ENCODE measurements at regions of chr3 and their contacts with region 1.

Region 1: GRCh38 chr3:107740992-107741896 is 218.5 kb downstream of the BBX start:
- DNase-seq: no peak
- H3K4me3 ChIP-seq: no peak overlapping the region
- CTCF ChIP-seq: peak; percentile 13

Region 2: DNA sequence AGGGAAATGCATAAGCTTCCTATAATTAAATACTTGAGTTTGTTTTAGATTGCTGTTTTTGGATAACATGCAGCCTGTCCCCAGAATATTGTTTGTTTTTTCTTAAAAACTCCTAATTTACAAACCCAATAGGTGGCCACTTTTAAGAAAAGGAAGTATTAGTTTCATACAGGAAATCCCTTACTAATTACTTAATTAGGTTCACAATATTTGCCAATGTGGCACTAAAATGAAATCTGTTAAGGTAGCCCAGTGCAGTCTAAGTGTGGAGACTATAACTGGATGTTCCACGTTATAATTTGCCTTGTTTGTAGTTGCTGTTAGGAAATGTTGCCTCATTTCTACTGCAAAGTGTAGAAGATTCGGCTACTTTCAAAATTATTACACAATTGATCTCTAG is 22.7 kb before region 1 on chr3:
- CTCF ChIA-PET with region 1: interaction called, 14 read pairs
- POLR2A ChIA-PET with region 1: no interaction called
- DNase-seq: no peak
- H3K4me3 ChIP-seq: no peak overlapping the region
- CTCF ChIP-seq: no peak

Region 3: GRCh38 chr3:107727102-107727501 is 14.1 kb before region 1 on chr3:
- CTCF ChIA-PET with region 1: interaction called, 17 read pairs
- POLR2A ChIA-PET with region 1: no interaction called
- DNase-seq: no peak
- H3K4me3 ChIP-seq: no peak overlapping the region
- CTCF ChIP-seq: no peak

Region 4: GRCh38 chr3:107753480-107753879 is 12.2 kb after region 1 on chr3:
- CTCF ChIA-PET with region 1: interaction called, 48 read pairs
- POLR2A ChIA-PET with region 1: no interaction called
- DNase-seq: no peak
- H3K4me3 ChIP-seq: no peak overlapping the region
- CTCF ChIP-seq: peak; percentile 60

Region 5: DNA sequence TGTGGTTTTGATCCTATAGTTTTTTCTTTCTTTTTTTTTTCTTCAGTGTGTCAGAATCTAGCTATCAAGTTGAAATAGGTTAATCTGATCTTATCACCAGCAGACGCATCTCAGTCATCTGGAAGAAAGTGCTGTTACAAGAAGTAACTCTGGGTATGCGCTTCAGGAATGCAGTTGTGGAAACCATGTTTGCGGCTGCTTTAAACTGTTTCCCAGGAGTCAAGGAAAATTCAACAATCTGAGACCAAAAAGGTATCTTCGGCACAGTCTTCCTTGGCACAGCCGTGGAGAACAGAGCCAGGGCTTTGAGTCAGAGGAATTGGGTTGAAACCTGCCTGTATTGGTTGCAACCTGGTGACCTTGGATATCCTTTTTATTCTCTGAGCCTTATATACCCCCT is 289.7 kb after region 1 on chr3:
- CTCF ChIA-PET with region 1: no interaction called
- POLR2A ChIA-PET with region 1: no interaction called
- DNase-seq: no peak
- H3K4me3 ChIP-seq: no peak overlapping the region
- CTCF ChIP-seq: no peak

Region 6: DNA sequence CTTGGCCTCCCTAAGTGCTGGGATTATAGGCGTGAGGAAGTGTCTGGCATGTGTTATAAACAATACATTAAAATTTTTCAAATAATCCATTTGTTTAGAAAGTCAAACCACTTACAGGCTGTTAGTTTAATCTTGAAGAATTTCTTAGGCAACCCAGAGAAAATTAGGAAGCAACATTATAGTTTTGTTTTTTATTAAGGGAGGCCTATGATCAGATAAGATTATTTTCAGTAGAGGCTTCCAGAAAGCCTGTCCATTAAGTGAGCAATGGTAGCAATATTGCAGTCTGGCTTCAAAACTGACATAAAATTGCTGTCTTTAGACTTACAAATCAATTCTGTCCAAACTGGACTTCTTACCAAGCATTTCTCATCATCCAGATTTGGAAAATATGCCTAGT is 300.0 kb after region 1 on chr3:
- CTCF ChIA-PET with region 1: no interaction called
- POLR2A ChIA-PET with region 1: no interaction called
- DNase-seq: no peak
- H3K4me3 ChIP-seq: no peak overlapping the region
- CTCF ChIP-seq: no peak

Measured in AG04449 (cell line).